Right ventricle myocardium inferior (tissue), 1 donor: ENCODE measurements at regions of chr5 and their contacts with region 1.

Region 1: GRCh38 chr5:149114403-149115312 is 26.6 kb upstream of the ABLIM3 start:
- DNase-seq: no peak
- ATAC-seq: peak; percentile 92

Region 2: GRCh38 chr5:149002053-149002452 is 112.6 kb before region 1 on chr5:
- intact Hi-C with region 1: loop called (anchors 5 kb)
- DNase-seq: no peak
- ATAC-seq: peak; percentile 55

Region 3: DNA sequence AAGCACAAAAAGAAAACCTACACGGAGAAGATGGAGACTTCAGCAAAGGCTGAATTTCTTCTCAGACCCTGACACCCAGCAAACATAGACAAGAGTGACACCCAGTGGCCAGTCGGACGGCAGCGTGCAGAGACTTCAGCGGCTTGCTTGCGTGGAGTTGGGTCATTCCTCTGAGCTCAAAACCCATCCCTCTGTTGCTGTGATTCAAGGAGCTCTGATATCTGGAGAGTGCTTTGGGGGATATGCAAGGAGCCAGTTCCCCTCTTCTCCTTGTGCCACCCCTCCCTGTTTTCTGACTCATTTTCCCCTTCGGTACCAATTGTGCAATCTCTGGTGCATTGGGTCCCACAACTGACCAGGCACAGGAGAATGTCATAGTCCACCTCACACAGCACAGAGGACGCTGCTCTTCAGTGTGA is 79.3 kb before region 1 on chr5:
- intact Hi-C with region 1: loop called (anchors 2 kb)
- DNase-seq: peak; percentile 86
- ATAC-seq: peak; percentile 79

Region 4: DNA sequence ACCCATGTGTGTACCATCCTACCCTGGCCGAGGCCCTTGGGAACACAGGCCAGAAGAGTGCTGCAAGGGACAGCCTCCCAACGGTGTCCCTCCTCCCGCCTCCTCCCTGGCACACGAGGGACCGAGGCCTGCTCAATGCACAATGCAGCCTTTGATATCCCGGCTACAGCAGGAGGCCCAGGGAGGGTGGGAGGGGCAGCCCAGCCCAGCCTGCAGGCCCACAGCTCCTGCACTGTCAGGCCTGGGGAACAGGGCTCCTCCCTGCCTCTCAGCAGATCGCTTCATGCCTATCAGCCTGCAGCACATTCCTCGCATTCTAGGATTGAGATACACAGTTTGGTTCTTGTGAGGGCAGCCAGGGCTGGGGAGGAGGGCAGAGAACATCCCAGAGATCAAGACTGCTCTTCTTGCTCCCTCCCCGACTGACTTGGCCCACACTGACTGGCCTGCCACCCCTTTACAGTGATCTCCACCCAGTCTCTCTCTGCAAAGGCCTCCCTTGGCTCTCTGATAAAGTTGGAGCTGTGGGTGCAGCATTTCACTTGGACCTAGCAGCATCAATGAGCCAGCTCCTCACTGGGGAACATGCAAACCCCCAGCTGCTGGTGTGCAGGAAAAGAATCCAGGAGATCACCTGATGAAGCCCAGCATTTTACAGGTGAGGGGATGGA is 51.5 kb before region 1 on chr5 and contains the start of gene SH3TC2:
- intact Hi-C with region 1: loop called (anchors 2 kb)
- DNase-seq: peak; percentile 86
- ATAC-seq: peak; percentile 89
- total RNA-seq, gene SH3TC2: 14.6 TPM